ENCODE measurements at regions of chr5 and their contacts with region 1.

Region 1: DNA sequence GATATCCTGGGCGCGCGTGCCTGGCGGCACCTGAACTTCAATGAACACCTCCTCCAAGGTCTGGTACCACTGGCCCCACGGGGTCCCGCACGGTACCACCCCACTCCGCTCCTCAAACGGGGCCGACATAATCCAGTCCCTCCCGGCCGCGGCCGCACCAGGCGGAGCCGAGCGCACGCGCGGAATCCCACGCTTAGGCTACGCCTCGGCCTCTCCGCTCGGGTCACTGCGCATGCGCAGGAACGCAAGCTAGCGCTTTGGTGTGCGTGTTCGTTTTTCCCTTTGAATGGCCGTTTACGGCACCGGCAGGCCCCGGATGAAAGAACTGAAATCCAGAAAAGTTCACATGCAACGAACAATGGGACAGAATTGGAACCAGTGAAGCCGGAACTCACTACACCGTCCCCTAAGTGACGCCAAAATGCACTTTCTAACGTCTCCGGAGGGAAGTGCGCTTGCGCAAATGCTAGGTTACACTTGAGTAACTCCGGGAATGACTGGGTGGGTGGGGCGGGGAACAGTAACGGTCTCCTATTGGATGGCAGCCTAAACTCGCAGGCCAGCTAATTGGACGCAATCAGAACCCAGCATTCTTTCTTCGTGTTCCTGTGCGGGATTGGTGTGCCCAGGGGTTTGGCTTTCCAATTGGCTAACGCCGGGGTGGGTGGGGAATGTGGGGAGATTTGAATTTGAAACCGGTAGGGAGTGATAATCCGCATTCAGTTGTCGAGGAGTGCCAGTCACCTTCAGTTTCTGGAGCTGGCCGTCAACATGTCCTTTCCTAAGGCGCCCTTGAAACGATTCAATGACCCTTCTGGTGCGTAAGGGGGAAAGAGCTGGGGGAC is at the starts of genes HMMR and NUDCD2:
- DNase-seq: peak; percentile 100
- H3K4me3 Mint-ChIP-seq: peak within 1 kb of the TSS; percentile 83
- H3K27ac Mint-ChIP-seq: peak within 1 kb of the TSS; percentile 99
- H3K4me1 Mint-ChIP-seq: peaks cover 48% of the 10 kb centered on the region
- H3K27me3 Mint-ChIP-seq: no peaks in the 10 kb centered on the region
- CTCF ChIP-seq: peak; percentile 13
- total RNA-seq, gene HMMR: 29.3 and 43.5 TPM in 2 replicates
- total RNA-seq, gene NUDCD2: 57.8 and 68.0 TPM in 2 replicates

Region 2: GRCh38 chr5:163094492-163095180 is 365.5 kb before region 1 on chr5:
- CTCF ChIA-PET with region 1: no interaction called
- POLR2A ChIA-PET with region 1: no interaction called
- intact Hi-C with region 1: no loop called
- DNase-seq: no peak
- H3K4me3 Mint-ChIP-seq: peak overlapping the region; percentile 15
- H3K27ac Mint-ChIP-seq: no peak overlapping the region
- H3K4me1 Mint-ChIP-seq: no peaks in the 10 kb centered on the region
- H3K27me3 Mint-ChIP-seq: peaks cover 33% of the 10 kb centered on the region
- CTCF ChIP-seq: no peak

Region 3: DNA sequence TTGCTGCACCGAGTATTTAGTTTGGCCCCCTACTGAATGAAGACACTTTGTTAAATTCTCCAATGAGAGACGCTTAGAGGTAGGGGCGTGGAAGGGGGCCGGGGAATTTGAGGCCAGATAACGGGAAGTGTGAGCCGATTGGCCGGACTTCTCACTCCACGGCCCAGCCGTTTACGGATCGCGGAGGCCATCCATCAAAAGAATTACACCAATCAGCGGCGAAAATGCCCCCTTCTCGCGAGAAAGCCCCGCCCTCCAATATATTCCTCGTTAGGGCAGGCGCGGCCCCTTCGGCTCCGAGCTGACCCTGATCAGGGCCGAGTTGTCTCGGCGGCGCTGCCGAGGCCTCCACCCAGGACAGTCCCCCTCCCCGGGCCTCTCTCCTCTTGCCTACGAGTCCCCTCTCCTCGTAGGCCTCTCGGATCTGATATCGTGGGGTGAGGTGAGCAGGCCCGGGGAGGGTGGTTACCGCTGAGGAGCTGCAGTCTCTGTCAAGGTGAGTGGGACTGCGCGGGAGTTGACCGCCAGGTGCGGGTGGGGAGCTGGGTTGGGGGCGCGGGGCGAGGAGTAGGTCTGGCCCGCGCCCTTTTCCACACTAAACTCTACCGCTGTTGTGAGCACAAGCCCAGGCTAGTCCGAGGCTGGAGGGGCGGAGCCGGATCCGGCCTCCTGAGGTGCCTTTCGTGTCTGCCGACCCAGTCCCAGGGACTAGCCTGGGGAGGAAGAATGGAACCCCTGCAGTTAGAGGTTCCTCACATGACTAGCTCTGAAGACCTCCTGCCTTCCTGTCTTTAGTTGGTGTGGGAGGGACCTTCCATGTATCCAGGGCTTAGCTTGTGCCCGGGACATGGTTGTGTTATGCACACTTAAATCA is 22.6 kb before region 1 on chr5 and contains the start of gene CCNG1:
- CTCF ChIA-PET with region 1: interaction called, 27 read pairs
- POLR2A ChIA-PET with region 1: interaction called, 392 read pairs
- intact Hi-C with region 1: no loop called
- DNase-seq: peak; percentile 100
- H3K4me3 Mint-ChIP-seq: peak within 1 kb of the TSS; percentile 92
- H3K27ac Mint-ChIP-seq: peak within 1 kb of the TSS; percentile 93
- H3K4me1 Mint-ChIP-seq: peaks cover 32% of the 10 kb centered on the region
- H3K27me3 Mint-ChIP-seq: no peaks in the 10 kb centered on the region
- CTCF ChIP-seq: peak; percentile 10
- total RNA-seq, gene CCNG1: 169 and 196 TPM in 2 replicates

Region 4: DNA sequence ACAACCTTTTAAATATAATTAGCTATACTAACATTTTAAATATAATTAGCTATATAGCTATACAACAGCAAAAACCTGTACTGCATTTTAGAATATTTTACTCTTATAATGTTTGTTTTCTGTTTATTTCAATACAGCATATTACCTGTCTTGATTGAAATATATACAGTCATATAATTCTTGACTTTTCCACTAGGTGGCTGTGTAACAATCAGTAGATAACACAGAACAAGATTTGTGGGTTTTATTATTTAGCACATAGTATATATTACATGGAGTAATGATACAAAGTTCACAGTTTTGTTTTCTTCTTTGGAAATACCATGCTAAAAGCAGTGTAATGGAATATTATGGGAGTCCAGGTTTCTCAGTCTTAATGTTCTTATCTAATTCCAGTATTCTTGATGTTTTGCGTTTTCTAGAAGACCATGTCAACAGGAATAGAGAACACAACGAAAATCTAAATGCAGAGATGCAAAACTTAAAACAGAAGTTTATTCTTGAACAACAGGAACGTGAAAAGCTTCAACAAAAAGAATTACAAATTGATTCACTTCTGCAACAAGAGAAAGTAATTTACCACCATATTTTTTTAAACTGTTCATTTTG is 13.6 kb after region 1 on chr5:
- CTCF ChIA-PET with region 1: interaction called, 69 read pairs
- POLR2A ChIA-PET with region 1: interaction called, 284 read pairs
- intact Hi-C with region 1: no loop called
- DNase-seq: peak; percentile 46
- H3K4me3 Mint-ChIP-seq: no peak overlapping the region
- H3K27ac Mint-ChIP-seq: no peak overlapping the region
- H3K4me1 Mint-ChIP-seq: peaks cover 13% of the 10 kb centered on the region
- H3K27me3 Mint-ChIP-seq: no peaks in the 10 kb centered on the region
- CTCF ChIP-seq: peak; percentile 42

Region 5: GRCh38 chr5:163489055-163489744 is 29.1 kb after region 1 on chr5:
- CTCF ChIA-PET with region 1: interaction called, 7 read pairs
- POLR2A ChIA-PET with region 1: interaction called, 284 read pairs
- intact Hi-C with region 1: no loop called
- DNase-seq: peak; percentile 66
- H3K4me3 Mint-ChIP-seq: no peak overlapping the region
- H3K27ac Mint-ChIP-seq: peak overlapping the region; percentile 14
- H3K4me1 Mint-ChIP-seq: peaks cover 4% of the 10 kb centered on the region
- H3K27me3 Mint-ChIP-seq: no peaks in the 10 kb centered on the region
- CTCF ChIP-seq: peak; percentile 14

Region 6: GRCh38 chr5:163498886-163499285 is 38.7 kb after region 1 on chr5:
- CTCF ChIA-PET with region 1: interaction called, 13 read pairs
- POLR2A ChIA-PET with region 1: interaction called, 305 read pairs
- intact Hi-C with region 1: loop called (anchors 1 kb)
- DNase-seq: no peak
- H3K4me3 Mint-ChIP-seq: no peak overlapping the region
- H3K27ac Mint-ChIP-seq: no peak overlapping the region
- H3K4me1 Mint-ChIP-seq: peaks cover 13% of the 10 kb centered on the region
- H3K27me3 Mint-ChIP-seq: no peaks in the 10 kb centered on the region
- CTCF ChIP-seq: no peak